B cell (primary cell): ENCODE measurements at regions of chr7 and their contacts with region 1.

Region 1: DNA sequence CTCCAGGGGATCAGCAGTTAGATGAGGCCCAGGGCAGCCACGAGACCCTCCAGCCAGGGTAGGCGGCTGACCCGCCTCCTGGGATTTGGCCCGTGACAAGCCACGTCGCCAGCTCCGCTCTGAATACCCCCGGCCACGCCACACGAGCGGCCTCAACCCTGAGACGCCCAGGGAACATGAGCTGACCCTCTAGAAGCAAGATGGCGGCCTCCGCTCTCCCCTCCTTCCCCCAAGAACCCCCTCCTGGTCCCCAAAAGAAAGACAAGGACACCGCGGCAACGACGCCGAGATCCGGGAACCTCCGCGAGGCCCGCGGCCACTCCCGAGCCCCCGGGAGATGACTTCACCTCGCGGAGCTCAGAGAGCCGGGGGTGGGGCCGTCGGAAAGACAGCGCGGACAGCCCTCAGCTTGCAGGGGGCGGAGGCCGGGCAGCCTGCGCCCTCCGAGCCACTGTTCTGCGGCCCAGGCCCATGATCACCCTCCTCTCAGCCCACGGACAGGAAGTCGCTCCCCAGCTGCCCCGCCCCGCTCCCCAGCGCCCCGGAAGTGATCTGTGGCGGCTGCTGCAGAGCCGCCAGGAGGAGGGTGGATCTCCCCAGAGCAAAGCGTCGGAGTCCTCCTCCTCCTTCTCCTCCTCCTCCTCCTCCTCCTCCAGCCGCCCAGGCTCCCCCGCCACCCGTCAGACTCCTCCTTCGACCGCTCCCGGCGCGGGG is at the start of gene RALA:
- DNase-seq: peak; percentile 90
- ATAC-seq: peak; percentile 90
- H3K4me3 ChIP-seq: peak within 1 kb of the TSS; percentile 82 to 97 (median 84)
- H3K4me3 Mint-ChIP-seq: peak within 1 kb of the TSS; percentile 95
- H3K27ac ChIP-seq: peak within 1 kb of the TSS; percentile 86 to 93
- H3K27ac Mint-ChIP-seq: peak within 1 kb of the TSS; percentile 92
- H3K4me1 ChIP-seq: peaks cover 24 to 26% of the 10 kb centered on the region in 2 donors
- H3K4me1 Mint-ChIP-seq: peaks cover 53% of the 10 kb centered on the region
- H3K27me3 ChIP-seq: no peaks in the 10 kb centered on the region
- H3K27me3 Mint-ChIP-seq: no peaks in the 10 kb centered on the region
- CTCF ChIP-seq: no peak
- total RNA-seq, gene RALA: 29.8 and 31.0 TPM in 2 replicates

Region 2: GRCh38 chr7:38186593-38187314 is 1436.4 kb before region 1 on chr7:
- CTCF ChIA-PET with region 1: no interaction called
- POLR2A ChIA-PET with region 1: no interaction called
- intact Hi-C with region 1: loop called (anchors 10 kb)
- DNase-seq: peak; percentile 41
- ATAC-seq: peak; percentile 50
- H3K4me3 ChIP-seq: no peak overlapping the region
- H3K4me3 Mint-ChIP-seq: no peak overlapping the region
- H3K27ac ChIP-seq: no peak overlapping the region
- H3K27ac Mint-ChIP-seq: no peak overlapping the region
- H3K4me1 ChIP-seq: peaks cover 41 to 53% of the 10 kb centered on the region in 2 donors
- H3K4me1 Mint-ChIP-seq: peaks cover 59% of the 10 kb centered on the region
- H3K27me3 ChIP-seq: no peaks in the 10 kb centered on the region
- H3K27me3 Mint-ChIP-seq: no peaks in the 10 kb centered on the region
- CTCF ChIP-seq: no peak

Region 3: GRCh38 chr7:39566023-39566921 is 56.9 kb before region 1 on chr7 and contains the start of gene YAE1:
- CTCF ChIA-PET with region 1: no interaction called
- POLR2A ChIA-PET with region 1: no interaction called
- intact Hi-C with region 1: loop called (anchors 1 kb)
- DNase-seq: peak; percentile 86
- ATAC-seq: peak; percentile 96
- H3K4me3 ChIP-seq: peak within 1 kb of the TSS; percentile 72 to 90 (median 89)
- H3K4me3 Mint-ChIP-seq: peak within 1 kb of the TSS; percentile 100
- H3K27ac ChIP-seq: peak within 1 kb of the TSS; percentile 65 to 79
- H3K27ac Mint-ChIP-seq: peak within 1 kb of the TSS; percentile 96
- H3K4me1 ChIP-seq: peaks cover 10 to 12% of the 10 kb centered on the region in 2 donors
- H3K4me1 Mint-ChIP-seq: peaks cover 21% of the 10 kb centered on the region
- H3K27me3 ChIP-seq: no peaks in the 10 kb centered on the region
- H3K27me3 Mint-ChIP-seq: peaks cover 1% of the 10 kb centered on the region
- CTCF ChIP-seq: no peak
- total RNA-seq, gene YAE1: 20.0 and 22.9 TPM in 2 replicates

Region 4: GRCh38 chr7:39580149-39580874 is 42.9 kb before region 1 on chr7:
- CTCF ChIA-PET with region 1: interaction called, 69 read pairs
- POLR2A ChIA-PET with region 1: no interaction called
- intact Hi-C with region 1: loop called (anchors 5 kb)
- DNase-seq: peak; percentile 87
- ATAC-seq: peak; percentile 95
- H3K4me3 ChIP-seq: no peak overlapping the region
- H3K4me3 Mint-ChIP-seq: no peak overlapping the region
- H3K27ac ChIP-seq: no peak overlapping the region
- H3K27ac Mint-ChIP-seq: no peak overlapping the region
- H3K4me1 ChIP-seq: no peaks in the 10 kb centered on the region
- H3K4me1 Mint-ChIP-seq: no peaks in the 10 kb centered on the region
- H3K27me3 ChIP-seq: no peaks in the 10 kb centered on the region
- H3K27me3 Mint-ChIP-seq: no peaks in the 10 kb centered on the region
- CTCF ChIP-seq: peak; percentile 93

Region 5: GRCh38 chr7:39633563-39634477 is 10.6 kb after region 1 on chr7:
- CTCF ChIA-PET with region 1: no interaction called
- POLR2A ChIA-PET with region 1: no interaction called
- intact Hi-C with region 1: no loop called
- DNase-seq: no peak
- ATAC-seq: no peak
- H3K4me3 ChIP-seq: no peak overlapping the region
- H3K4me3 Mint-ChIP-seq: no peak overlapping the region
- H3K27ac ChIP-seq: no peak overlapping the region
- H3K27ac Mint-ChIP-seq: no peak overlapping the region
- H3K4me1 ChIP-seq: peaks cover 11 to 13% of the 10 kb centered on the region in 2 donors
- H3K4me1 Mint-ChIP-seq: peaks cover 43% of the 10 kb centered on the region
- H3K27me3 ChIP-seq: no peaks in the 10 kb centered on the region
- H3K27me3 Mint-ChIP-seq: no peaks in the 10 kb centered on the region
- CTCF ChIP-seq: no peak

Region 6: DNA sequence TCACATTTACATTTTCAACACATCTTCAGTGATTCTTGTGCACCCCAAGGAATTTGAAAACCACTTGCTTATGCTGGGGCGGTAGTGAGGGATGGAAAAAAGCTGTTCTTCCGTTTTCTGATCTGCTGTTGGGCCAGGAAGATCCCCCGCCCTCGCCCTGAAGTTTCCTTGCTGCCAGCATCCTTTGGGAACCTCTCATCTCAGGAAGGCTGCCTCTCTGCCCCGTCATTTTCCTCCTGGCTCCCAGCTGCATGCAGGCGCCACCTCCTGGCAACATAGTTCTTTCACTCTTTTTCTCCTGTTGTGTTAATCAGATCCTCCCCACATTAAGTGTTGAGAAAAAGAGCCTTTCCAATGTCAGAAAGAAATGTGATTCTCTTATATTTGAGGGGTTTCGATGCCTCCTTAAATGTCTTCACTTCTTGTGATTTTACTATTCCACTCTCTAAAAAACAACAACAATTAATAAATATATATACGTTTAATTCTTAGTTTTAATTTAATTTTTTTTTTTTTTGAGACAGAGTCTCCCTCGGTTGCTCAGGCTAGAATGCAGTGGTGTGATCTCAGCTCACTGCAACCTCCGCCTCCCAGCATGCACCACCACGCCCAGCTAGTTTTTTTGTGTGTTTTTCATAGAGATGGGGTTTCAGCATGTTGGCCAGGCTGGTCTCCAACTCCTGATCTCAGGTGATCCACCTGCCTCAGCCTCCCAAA is 123.1 kb after region 1 on chr7:
- CTCF ChIA-PET with region 1: interaction called, 13 read pairs
- POLR2A ChIA-PET with region 1: no interaction called
- intact Hi-C with region 1: no loop called
- DNase-seq: peak; percentile 71
- ATAC-seq: peak; percentile 51
- H3K4me3 ChIP-seq: no peak overlapping the region
- H3K4me3 Mint-ChIP-seq: no peak overlapping the region
- H3K27ac ChIP-seq: no peak overlapping the region
- H3K27ac Mint-ChIP-seq: no peak overlapping the region
- H3K4me1 ChIP-seq: peaks cover 0 to 6% of the 10 kb centered on the region in 2 donors
- H3K4me1 Mint-ChIP-seq: peaks cover 15% of the 10 kb centered on the region
- H3K27me3 ChIP-seq: no peaks in the 10 kb centered on the region
- H3K27me3 Mint-ChIP-seq: no peaks in the 10 kb centered on the region
- CTCF ChIP-seq: peak; percentile 75

Region 7: DNA sequence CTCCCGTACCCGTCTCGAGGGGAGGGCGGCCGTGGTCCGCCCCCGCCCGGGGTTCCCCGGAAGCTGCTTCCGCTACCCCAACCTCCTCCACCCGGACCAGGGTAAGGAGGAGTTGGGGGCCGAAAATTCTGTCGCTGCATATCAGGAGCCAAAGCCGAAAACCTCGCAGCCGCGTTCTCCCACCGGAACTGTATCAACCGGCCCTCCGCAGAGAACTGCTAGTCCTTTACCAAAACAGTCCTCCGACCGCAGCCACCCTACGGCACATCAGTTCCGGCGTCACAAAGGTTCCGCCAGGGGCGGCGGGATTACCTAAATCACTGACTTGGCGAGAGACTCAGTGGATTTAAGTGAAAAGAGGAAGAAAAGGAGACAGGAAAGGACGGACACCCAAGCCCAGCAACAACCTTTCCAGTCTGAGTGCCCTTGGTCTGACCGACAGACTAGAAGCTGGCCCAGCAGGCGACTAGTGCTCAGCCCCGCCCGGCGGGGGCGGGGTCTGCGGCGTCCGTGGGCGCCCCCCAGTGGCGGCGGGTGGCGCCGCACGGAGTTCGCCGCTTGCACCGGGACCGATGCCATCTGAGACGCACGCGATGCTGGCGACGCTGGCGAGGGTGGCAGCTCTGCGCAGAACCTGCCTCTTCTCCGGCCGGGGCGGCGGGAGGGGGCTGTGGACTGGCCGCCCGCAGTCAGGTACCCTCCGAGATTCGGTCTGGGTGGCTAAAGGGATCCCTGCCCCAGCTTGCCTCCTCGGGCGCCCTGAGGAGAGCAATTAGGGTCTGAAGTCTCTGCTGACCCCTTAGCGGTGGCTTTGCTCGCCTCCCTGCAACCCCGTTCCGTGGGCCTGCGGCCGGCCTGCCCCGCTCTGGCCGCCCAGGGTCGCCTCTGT is 511.5 kb after region 1 on chr7 and contains the starts of genes MPLKIP and SUGCT:
- CTCF ChIA-PET with region 1: interaction called, 9 read pairs
- POLR2A ChIA-PET with region 1: no interaction called
- intact Hi-C with region 1: loop called (anchors 1 kb)
- DNase-seq: peak; percentile 97
- ATAC-seq: peak; percentile 91
- H3K4me3 ChIP-seq: peak within 1 kb of the TSS; percentile 87 to 95 (median 94)
- H3K4me3 Mint-ChIP-seq: peak within 1 kb of the TSS; percentile 95
- H3K27ac ChIP-seq: peak within 1 kb of the TSS; percentile 84 to 91
- H3K27ac Mint-ChIP-seq: peak within 1 kb of the TSS; percentile 98
- H3K4me1 ChIP-seq: peaks cover 18 to 22% of the 10 kb centered on the region in 2 donors
- H3K4me1 Mint-ChIP-seq: peaks cover 30% of the 10 kb centered on the region
- H3K27me3 ChIP-seq: peaks cover 0 to 3% (median 0%) of the 10 kb centered on the region in 4 experiments
- H3K27me3 Mint-ChIP-seq: peaks cover 3% of the 10 kb centered on the region
- CTCF ChIP-seq: peak; percentile 99
- total RNA-seq, gene MPLKIP: 31.4 and 34.1 TPM in 2 replicates
- total RNA-seq, gene SUGCT: 0.86 and 2.6 TPM in 2 replicates